HEK293T (cell line): ENCODE measurements at regions of chr1 and their contacts with region 1.

Region 1: DNA sequence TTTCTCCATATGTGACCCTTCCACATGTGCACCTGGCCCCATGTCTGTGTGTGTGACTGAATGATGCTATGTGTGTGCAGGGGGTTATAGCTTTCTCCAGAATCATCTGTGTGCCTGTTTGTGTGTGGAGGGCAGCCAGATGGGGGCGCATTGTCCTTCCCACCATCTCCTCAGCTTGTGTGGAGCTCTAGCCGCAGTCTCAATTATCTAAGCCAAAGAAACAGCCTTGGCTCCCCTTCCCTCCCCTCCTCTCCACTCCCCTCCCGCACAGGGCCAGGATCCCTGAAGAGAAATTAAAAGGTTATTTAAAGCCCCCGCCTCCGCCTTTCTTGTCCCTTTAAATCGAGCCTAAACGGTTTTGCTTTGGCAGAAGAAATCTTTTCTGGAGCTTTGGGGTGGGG is 1.8 kb upstream of the DMBX1 start:
- DNase-seq: peak; percentile 62

Region 2: GRCh38 chr1:46477153-46477929 is 10.5 kb before region 1 on chr1:
- CTCF ChIA-PET with region 1: interaction called, 12 read pairs
- POLR2A ChIA-PET with region 1: interaction called, 3 read pairs
- DNase-seq: peak; percentile 84

Region 3: DNA sequence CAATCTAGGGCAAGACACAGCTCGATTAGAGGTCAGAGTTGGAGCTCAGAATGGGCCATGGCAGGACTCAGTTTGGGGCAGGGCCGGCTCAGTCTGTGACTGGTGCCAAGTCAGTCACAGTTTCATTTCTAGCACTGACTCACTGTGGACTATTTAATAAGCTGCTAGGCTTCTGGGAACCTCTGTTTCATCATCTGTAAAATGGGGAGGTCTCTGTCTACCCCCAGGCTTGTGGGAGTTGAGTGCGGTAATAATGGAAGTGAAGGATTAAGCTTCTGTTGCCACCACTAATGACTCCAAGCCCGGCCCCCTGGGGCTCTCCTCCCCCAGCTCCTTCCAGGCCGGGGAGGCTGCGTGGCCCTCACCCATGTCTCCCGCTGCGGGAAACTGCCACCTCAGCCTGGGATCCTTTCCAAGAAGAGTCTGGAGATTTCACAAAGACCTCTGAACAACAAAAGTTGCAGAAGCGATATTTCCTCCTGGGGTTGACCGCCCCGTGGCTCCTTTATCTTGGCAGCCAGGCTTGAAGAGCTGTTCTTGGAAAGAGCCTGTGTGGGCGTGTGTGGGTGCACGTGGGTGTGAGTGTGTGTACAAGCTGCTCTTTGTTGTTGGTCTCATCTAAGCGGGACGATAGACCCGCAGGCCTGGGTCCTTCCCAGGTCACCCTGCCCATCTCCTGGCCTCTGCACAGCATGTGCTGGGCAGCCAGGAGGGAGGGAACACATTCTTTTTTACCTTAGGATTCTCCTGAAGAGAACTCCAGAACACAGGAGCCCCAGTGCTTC is 34.6 kb after region 1 on chr1:
- CTCF ChIA-PET with region 1: interaction called, 28 read pairs
- POLR2A ChIA-PET with region 1: interaction called, 8 read pairs
- DNase-seq: no peak

Region 4: DNA sequence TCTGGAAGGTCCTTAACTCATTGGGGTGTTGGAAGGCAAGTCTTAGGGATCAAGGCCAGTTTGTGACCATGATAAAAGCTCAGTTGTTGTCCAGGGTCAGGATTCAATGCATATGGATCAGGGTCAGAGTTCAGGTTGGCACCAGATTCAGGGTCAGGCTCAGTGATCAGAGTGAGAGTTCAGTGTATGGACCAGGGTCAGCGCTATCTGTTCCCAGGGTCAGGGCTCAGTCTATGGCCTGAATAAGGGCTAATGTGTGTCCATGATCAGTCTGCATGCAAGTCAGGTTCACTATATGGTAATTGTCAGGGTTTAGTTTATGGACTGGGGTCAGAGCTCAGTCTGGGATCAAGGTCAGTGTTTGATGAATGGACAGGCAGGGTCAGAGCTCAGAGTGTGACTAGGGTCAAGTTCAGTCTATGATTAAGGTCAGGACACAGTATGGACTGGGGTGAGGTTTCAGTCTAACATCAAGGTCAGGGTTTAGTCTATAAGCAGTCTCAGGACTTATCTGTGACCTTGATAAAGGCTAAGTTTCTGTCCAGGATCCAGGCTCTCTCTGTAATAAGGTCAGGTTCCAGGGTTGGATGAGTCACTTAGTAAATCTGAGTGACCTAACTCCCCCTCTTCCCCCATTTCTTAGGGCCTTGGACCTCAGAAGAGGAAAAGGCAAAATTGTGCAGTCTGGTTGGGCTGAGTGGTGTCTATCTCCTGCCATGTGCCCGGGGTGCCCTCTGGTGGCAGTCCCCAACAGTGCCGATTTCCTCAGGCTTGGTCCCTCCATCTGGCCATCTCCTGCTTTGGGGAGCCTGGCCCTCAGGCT is 39.9 kb after region 1 on chr1:
- CTCF ChIA-PET with region 1: interaction called, 28 read pairs
- POLR2A ChIA-PET with region 1: interaction called, 8 read pairs
- DNase-seq: peak; percentile 85